Right lobe of liver (tissue), 6 donors: ENCODE measurements at regions of chr11 and their contacts with region 1.

Region 1: DNA sequence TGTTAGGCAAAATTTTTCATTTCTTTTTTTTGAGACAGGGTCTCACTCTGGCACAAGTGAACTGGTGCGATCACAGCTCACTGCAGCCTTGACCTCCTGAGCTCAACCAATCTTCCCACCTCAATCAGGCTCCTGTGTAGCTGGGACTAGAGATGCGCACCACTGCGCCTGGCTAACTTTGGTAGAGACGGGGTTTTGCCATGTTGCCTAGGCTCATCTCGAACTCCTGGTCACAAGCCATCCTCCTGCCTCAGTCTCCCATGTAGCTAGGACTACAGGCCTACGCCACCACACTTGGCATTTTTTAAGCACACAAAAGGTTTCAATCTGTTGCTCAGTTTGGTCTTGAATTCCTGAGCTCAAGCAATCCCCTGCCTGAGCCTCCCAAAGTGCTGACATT is 9.1 kb downstream of the FNBP4 start:
- DNase-seq: no peak
- ATAC-seq: no peak
- H3K4me3 ChIP-seq: no peak overlapping the region
- H3K27ac ChIP-seq: no peak overlapping the region
- H3K4me1 ChIP-seq: no peaks in the 10 kb centered on the region
- H3K27me3 ChIP-seq: no peaks in the 10 kb centered on the region
- CTCF ChIP-seq: no peak
- POLR2A ChIP-seq: no peak

Region 2: DNA sequence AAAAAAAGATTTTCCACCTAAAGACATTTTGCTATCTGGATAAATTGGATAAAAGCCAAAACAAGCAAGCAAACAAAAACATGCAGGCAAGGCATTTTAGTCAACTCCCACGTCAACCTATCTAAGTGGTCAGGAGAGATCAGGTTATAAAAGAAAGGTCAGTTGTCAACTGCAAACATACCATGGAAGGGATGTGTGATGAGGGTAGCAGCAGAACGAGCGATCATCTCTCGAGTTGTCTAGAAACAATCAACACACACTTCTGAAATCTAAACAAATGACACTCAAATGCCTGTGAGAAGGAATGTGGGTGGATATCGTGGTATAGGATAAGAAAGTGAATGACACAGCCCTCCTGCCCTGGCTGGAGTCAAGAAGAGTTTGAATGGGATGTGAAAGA is 126.6 kb before region 1 on chr11:
- intact Hi-C with region 1: loop called in 1 of 2 experiments (anchors 10 kb)
- DNase-seq: no peak
- ATAC-seq: peak; percentile 44 to 62 (median 54)
- H3K4me3 ChIP-seq: no peak overlapping the region
- H3K27ac ChIP-seq: peak overlapping the region in 1 of 3 donors; percentile 14
- H3K4me1 ChIP-seq: no peaks in the 10 kb centered on the region
- H3K27me3 ChIP-seq: no peaks in the 10 kb centered on the region
- CTCF ChIP-seq: no peak
- POLR2A ChIP-seq: no peak